ENCODE measurements at regions of chr1 and their contacts with region 1.

Region 1: DNA sequence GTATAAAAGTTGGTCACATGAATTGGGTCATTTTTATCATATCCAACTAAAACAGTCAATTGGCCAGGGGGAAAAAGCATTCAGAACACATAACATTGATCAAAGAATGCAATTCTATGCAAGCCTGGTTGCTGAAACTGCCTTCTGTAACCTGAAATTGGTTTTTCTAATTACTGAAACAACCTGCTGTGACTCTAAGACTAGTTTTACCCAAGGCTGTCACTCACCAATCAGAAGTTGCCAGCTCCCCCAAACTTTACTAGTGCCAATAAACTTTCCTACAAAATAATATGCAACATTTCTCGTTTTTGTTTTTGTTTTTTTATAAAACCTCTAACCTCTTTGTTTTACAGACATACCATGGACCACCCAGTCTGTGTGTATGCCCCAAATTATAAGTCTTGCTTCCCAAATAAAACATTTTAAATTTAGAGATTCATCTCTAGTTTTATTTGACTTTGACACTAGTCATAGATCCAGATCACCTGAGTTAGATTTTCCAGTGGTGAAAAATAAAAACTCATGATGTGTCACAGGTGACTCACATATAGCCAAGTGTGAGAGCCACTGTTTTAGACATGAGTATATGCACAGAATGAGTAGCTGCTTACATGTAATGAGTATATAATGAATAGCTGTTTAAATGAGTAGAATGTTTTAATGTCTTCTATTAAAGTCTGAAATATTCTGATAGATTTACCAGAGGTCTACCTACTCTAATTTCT is 64.2 kb upstream of the CR2 start:
- DNase-seq: no peak
- ATAC-seq: no peak
- H3K4me3 ChIP-seq: no peak overlapping the region
- H3K27ac ChIP-seq: no peak overlapping the region
- H3K4me1 ChIP-seq: no peaks in the 10 kb centered on the region
- H3K27me3 ChIP-seq: no peaks in the 10 kb centered on the region
- CTCF ChIP-seq: no peak
- EP300 ChIP-seq: peak; percentile 67; the same call in 1 of the 2 replicates
- POLR2A ChIP-seq: no peak
- RAD21 ChIP-seq: no peak

Region 2: GRCh38 chr1:205849619-205850355 is 1540.1 kb before region 1 on chr1 and contains the start of gene PM20D1:
- CTCF ChIA-PET with region 1: no interaction called
- POLR2A ChIA-PET with region 1: no interaction called
- in situ Hi-C with region 1: no loop called
- intact Hi-C with region 1: no loop called
- DNase-seq: peak; percentile 68 to 91 (median 82)
- ATAC-seq: peak; percentile 99
- H3K4me3 ChIP-seq: no peak within 1 kb of the TSS
- H3K27ac ChIP-seq: no peak within 1 kb of the TSS
- H3K4me1 ChIP-seq: peaks cover 0 to 6% of the 10 kb centered on the region in 2 experiments; a peak in 2 of 5 replicates
- H3K27me3 ChIP-seq: peaks cover 3 to 17% of the 10 kb centered on the region in 2 experiments; a peak in 3 of 5 replicates
- CTCF ChIP-seq: no peak
- EP300 ChIP-seq: no peak
- POLR2A ChIP-seq: no peak
- RAD21 ChIP-seq: no peak
- polyA plus RNA-seq, gene PM20D1: not detected

Region 3: DNA sequence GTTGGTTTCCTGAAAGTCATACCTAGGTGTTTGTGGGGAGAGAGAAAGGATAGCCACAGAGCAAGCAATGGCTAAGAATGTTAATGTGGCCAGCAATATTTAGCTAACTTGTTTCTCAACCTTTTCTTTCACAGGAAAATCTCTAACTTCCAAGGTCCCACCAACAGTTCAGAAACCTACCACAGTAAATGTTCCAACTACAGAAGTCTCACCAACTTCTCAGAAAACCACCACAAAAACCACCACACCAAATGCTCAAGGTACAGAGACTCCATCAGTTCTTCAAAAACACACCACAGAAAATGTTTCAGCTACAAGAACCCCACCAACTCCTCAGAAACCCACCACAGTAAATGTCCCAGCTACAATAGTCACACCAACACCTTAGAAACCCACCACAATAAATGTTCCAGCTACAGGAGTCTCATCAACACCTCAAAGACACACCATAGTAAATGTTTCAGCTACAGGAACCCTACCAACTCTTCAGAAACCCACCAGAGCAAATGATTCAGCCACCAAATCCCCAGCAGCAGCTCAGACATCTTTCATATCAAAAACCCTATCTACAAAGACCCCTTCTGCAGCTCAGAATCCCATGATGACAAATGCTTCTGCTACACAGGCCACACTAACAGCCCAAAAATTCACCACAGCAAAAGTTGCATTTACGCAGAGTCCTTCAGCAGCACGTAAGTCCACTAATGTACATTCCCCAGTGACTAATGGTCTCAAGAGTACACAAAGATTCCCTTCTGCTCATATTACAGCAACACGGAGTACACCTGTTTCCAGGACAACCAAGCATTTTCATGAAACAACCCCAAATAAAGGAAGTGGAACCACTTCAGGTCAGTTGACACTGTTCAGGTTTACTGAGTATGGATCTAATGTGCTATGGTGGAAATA is 53.1 kb before region 1 on chr1:
- CTCF ChIA-PET with region 1: no interaction called
- POLR2A ChIA-PET with region 1: no interaction called
- in situ Hi-C with region 1: no loop called
- intact Hi-C with region 1: no loop called
- DNase-seq: no peak
- ATAC-seq: peak; percentile 27
- H3K4me3 ChIP-seq: no peak overlapping the region
- H3K27ac ChIP-seq: no peak overlapping the region
- H3K4me1 ChIP-seq: no peaks in the 10 kb centered on the region
- H3K27me3 ChIP-seq: no peaks in the 10 kb centered on the region
- CTCF ChIP-seq: no peak
- EP300 ChIP-seq: no peak
- POLR2A ChIP-seq: no peak; the same call in 1 of the 2 replicates
- RAD21 ChIP-seq: no peak

Region 4: GRCh38 chr1:207352554-207352953 is 37.3 kb before region 1 on chr1:
- CTCF ChIA-PET with region 1: no interaction called
- POLR2A ChIA-PET with region 1: no interaction called
- in situ Hi-C with region 1: loop called (anchors 5 kb)
- intact Hi-C with region 1: no loop called
- DNase-seq: no peak
- ATAC-seq: no peak
- H3K4me3 ChIP-seq: no peak overlapping the region
- H3K27ac ChIP-seq: no peak overlapping the region
- H3K4me1 ChIP-seq: no peaks in the 10 kb centered on the region
- H3K27me3 ChIP-seq: no peaks in the 10 kb centered on the region
- CTCF ChIP-seq: no peak
- EP300 ChIP-seq: no peak
- POLR2A ChIP-seq: no peak
- RAD21 ChIP-seq: no peak; a peak in 1 of 4 replicates